H1 (cell line): ENCODE measurements at regions of chr10 and their contacts with region 1.

Region 1: GRCh38 chr10:68560186-68560942 is at the start of gene TET1:
- DNase-seq: peak; percentile 59 to 97
- H3K4me3 ChIP-seq: peak within 1 kb of the TSS; percentile 88 to 98 (median 94)
- H3K27ac ChIP-seq: peak within 1 kb of the TSS; percentile 64; the same call in 1 of the 2 replicates
- H3K4me1 ChIP-seq: peaks cover 0 to 16% (median 3%) of the 10 kb centered on the region in 4 experiments; a peak in 4 of 7 replicates
- H3K27me3 ChIP-seq: no peaks in the 10 kb centered on the region
- CTCF ChIP-seq: no peak
- EP300 ChIP-seq: no peak
- POLR2A ChIP-seq: peak; percentile 81 to 90
- RAD21 ChIP-seq: peak in 1 of 2 experiments; percentile 18; a peak in 1 of 4 replicates
- total RNA-seq, gene TET1: 68.5 and 69.3 TPM in 2 replicates

Region 2: DNA sequence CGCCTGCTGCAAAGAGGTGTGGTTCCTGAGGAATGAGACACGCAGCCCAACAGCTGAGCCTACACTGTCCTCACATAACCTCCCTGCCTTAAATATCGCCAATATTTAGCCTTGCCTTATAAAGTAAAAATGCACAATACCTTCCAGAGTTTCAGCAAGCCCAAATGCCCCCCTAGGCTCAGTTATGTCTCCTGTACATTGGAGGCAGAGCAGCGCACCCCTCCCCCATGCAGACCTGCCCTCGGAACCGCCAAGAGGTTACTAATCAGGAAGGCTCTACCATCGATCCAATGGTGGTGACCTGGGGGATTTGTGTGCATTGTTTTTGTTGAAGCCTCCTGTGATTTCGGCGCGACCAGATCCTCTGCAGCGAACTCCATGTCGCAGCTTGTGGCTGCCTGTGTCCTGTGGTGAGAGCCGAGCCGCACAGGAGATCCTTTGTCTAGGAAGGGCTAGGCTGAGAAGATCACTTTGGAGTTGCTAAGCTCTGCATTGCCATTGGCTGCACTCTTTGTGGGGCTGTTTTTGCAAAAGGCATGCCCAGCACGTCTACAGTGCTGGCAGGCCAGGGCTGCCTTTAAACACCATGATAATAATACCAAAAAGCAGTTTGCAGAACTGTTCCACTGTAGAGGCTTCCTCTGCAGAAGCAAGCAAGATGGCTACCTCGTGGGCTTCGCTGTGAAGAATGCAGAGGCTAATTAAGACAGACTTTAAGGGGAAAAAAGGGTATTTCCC is 39.8 kb after region 1 on chr10:
- CTCF ChIA-PET with region 1: interaction called, 5 read pairs
- POLR2A ChIA-PET with region 1: interaction called, 55 read pairs
- DNase-seq: peak; percentile 82 to 86
- H3K4me3 ChIP-seq: peak overlapping the region; percentile 21 to 51 (median 34); a peak in 7 of 8 replicates
- H3K27ac ChIP-seq: peak overlapping the region; percentile 65
- H3K4me1 ChIP-seq: peaks cover 8 to 20% (median 13%) of the 10 kb centered on the region in 4 experiments
- H3K27me3 ChIP-seq: no peaks in the 10 kb centered on the region
- CTCF ChIP-seq: no peak
- EP300 ChIP-seq: peak in 1 of 2 experiments; percentile 50; a peak in 1 of 3 replicates
- POLR2A ChIP-seq: peak; percentile 27 to 72
- RAD21 ChIP-seq: peak; percentile 13 to 27; a peak in 2 of 4 replicates

Region 3: DNA sequence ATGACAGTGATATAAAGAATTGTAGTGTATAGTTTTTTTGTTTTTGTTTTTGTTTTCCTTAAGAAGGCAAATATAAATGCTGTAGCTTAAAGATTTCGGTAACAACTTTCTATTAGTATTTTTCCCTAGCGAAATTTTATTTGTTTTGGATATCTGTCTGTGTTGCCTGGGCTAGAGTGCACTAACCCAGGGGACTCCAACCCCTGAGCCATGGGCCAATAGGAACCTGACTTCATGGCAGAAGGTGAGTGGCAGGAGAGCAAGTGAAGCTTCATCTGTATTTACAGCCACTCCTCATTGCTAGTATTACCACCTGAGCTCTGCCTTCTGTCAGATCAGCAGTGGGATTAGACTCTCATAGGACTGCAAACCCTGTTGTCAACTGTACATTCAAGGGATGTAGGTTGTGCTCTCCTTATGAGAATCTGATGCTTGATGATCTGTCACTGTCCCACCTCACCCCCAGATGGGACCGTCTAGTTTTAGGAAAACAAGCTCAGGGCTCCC is 95.3 kb after region 1 on chr10:
- CTCF ChIA-PET with region 1: no interaction called
- POLR2A ChIA-PET with region 1: no interaction called
- DNase-seq: no peak
- H3K4me3 ChIP-seq: no peak overlapping the region
- H3K27ac ChIP-seq: no peak overlapping the region
- H3K4me1 ChIP-seq: no peaks in the 10 kb centered on the region
- H3K27me3 ChIP-seq: no peaks in the 10 kb centered on the region
- CTCF ChIP-seq: no peak
- EP300 ChIP-seq: no peak
- POLR2A ChIP-seq: no peak
- RAD21 ChIP-seq: no peak

Region 4: DNA sequence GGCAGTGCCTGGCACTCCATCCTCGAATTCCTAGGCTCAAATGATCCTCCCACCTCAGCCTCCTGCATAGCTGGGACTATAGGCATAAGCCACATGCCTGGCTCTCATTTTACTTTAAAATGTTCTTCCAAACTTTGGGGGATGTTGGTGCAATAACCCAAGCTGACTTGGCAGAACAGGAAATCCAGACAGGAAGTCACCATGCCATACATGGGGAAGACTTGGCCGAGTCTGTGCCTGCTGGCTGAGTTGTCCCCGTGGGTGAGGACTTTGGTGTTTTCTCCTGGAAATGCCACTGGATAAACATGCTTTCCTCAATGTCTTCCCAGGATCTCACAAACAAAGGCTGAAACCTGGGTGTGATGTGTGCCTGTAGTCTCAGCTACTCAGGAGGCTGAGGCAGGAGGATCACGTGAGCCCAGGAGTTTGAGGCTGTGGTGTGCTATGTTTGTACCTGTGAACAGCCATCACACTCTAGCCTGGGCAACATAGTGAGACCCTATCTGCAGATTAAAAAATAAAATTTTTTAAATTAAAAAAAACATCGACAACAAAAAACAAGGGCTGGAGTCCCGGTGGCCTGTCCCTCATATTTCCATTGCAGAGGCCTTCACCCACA is 679.6 kb after region 1 on chr10:
- CTCF ChIA-PET with region 1: no interaction called
- POLR2A ChIA-PET with region 1: no interaction called
- DNase-seq: no peak
- H3K4me3 ChIP-seq: no peak overlapping the region
- H3K27ac ChIP-seq: no peak overlapping the region
- H3K4me1 ChIP-seq: no peaks in the 10 kb centered on the region
- H3K27me3 ChIP-seq: no peaks in the 10 kb centered on the region
- CTCF ChIP-seq: no peak
- EP300 ChIP-seq: no peak
- POLR2A ChIP-seq: no peak
- RAD21 ChIP-seq: no peak